Motor neuron (in vitro differentiated cells): ENCODE measurements at regions of chr5 and their contacts with region 1.

Region 1: GRCh38 chr5:10635257-10635866 is 71.5 kb downstream of the ANKRD33B start:
- ATAC-seq: peak in 3 of 8 experiments; percentile 22 to 57 (median 25)
- H3K4me3 ChIP-seq: no peak overlapping the region
- H3K27ac ChIP-seq: no peak overlapping the region
- H3K4me1 ChIP-seq: peaks cover 0 to 6% of the 10 kb centered on the region in 2 donors

Region 2: GRCh38 chr5:10452768-10453331 is 182.5 kb before region 1 on chr5:
- in situ Hi-C with region 1: loop called in 4 of 9 experiments (anchors 25 kb)
- ATAC-seq: peak; percentile 51 to 88 (median 76)
- H3K4me3 ChIP-seq: no peak overlapping the region
- H3K27ac ChIP-seq: no peak overlapping the region
- H3K4me1 ChIP-seq: peaks cover 5 to 20% of the 10 kb centered on the region in 2 donors